Activated CD4-positive, alpha-beta memory T cell treated with anti-CD3 and anti-CD28 coated beads, Interleukin-2, amount 10 ng/mL, durations not matched to agents 7 days and 5 days (primary cell): ENCODE measurements at regions of chr17 and their contacts with region 1.

Region 1: GRCh38 chr17:49997791-49998703 is 3.0 kb upstream of the DLX3 start:
- DNase-seq: peak; percentile 86
- H3K4me3 Mint-ChIP-seq: no peak overlapping the region
- H3K27ac Mint-ChIP-seq: no peak overlapping the region
- H3K4me1 Mint-ChIP-seq: peaks cover 33% of the 10 kb centered on the region
- H3K27me3 Mint-ChIP-seq: peaks cover 72% of the 10 kb centered on the region

Region 2: GRCh38 chr17:49556223-49556971 is 441.6 kb before region 1 on chr17:
- CTCF ChIA-PET with region 1: interaction called, 10 read pairs
- POLR2A ChIA-PET with region 1: no interaction called
- DNase-seq: peak; percentile 84
- H3K4me3 Mint-ChIP-seq: no peak overlapping the region
- H3K27ac Mint-ChIP-seq: no peak overlapping the region
- H3K4me1 Mint-ChIP-seq: peaks cover 5% of the 10 kb centered on the region
- H3K27me3 Mint-ChIP-seq: peaks cover 15% of the 10 kb centered on the region

Region 3: GRCh38 chr17:49861150-49861892 is 136.7 kb before region 1 on chr17:
- CTCF ChIA-PET with region 1: interaction called, 132 read pairs
- POLR2A ChIA-PET with region 1: interaction called, 3 read pairs
- DNase-seq: peak; percentile 43
- H3K4me3 Mint-ChIP-seq: no peak overlapping the region
- H3K27ac Mint-ChIP-seq: no peak overlapping the region
- H3K4me1 Mint-ChIP-seq: no peaks in the 10 kb centered on the region
- H3K27me3 Mint-ChIP-seq: peaks cover 9% of the 10 kb centered on the region

Region 4: DNA sequence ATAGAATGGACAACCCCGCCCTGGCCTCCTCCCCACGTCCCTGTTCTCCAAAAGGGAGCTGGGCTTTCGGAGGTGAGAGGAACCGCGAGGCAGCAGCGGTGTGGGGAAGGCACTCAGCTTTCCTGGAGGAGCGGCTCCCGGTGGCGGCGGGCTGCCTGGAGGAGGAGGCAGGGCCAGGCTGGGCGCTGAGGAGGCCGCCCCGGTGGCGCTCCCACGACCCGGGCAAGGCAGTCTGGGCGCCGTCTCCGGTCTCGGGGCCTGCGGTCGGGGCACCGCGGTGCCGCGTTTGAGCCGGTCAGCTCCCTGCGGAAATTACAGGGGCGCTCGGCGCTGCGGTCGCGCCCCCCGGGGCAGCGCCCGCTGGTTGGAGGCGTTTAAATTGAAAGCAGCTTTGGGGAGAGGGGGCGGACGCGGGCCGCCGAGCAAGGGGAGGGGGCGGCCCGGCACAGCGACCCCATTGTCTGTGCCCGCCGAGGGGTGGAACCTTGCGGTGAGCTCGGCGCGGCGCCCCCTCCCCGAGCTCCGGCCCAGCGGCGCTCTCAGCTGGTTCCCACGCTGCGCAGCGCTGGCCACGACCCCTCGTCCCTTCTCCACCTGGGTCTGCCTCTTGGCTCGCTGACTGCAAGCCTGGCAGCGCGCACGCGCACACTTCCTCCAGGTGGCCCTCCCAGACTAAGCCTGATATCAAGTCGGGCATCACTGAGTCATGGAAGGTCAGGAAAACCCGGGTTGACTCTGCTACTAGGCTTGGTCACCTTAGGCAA is 87.8 kb before region 1 on chr17:
- CTCF ChIA-PET with region 1: interaction called, 17 read pairs
- POLR2A ChIA-PET with region 1: no interaction called
- DNase-seq: no peak
- H3K4me3 Mint-ChIP-seq: no peak overlapping the region
- H3K27ac Mint-ChIP-seq: no peak overlapping the region
- H3K4me1 Mint-ChIP-seq: peaks cover 6% of the 10 kb centered on the region
- H3K27me3 Mint-ChIP-seq: peaks cover 69% of the 10 kb centered on the region

Region 5: GRCh38 chr17:49963626-49964302 is 34.3 kb before region 1 on chr17:
- CTCF ChIA-PET with region 1: interaction called, 20 read pairs
- POLR2A ChIA-PET with region 1: interaction called, 3 read pairs
- DNase-seq: no peak
- H3K4me3 Mint-ChIP-seq: peak overlapping the region; percentile 27
- H3K27ac Mint-ChIP-seq: no peak overlapping the region
- H3K4me1 Mint-ChIP-seq: peaks cover 23% of the 10 kb centered on the region
- H3K27me3 Mint-ChIP-seq: peaks cover 73% of the 10 kb centered on the region

Region 6: GRCh38 chr17:50015146-50015545 is 17.1 kb after region 1 on chr17:
- CTCF ChIA-PET with region 1: interaction called, 10 read pairs
- POLR2A ChIA-PET with region 1: no interaction called
- DNase-seq: no peak
- H3K4me3 Mint-ChIP-seq: no peak overlapping the region
- H3K27ac Mint-ChIP-seq: no peak overlapping the region
- H3K4me1 Mint-ChIP-seq: no peaks in the 10 kb centered on the region
- H3K27me3 Mint-ChIP-seq: peaks cover 19% of the 10 kb centered on the region